ENCODE measurements at regions of chr9 and their contacts with region 1.

Region 1: GRCh38 chr9:6907772-6908381 is 150.1 kb downstream of the KDM4C start:
- DNase-seq: no peak
- ATAC-seq: no peak
- H3K4me3 ChIP-seq: no peak overlapping the region
- H3K27ac ChIP-seq: no peak overlapping the region
- H3K4me1 ChIP-seq: peaks cover 0 to 12% (median 4%) of the 10 kb centered on the region in 9 donors
- H3K27me3 ChIP-seq: no peaks in the 10 kb centered on the region
- CTCF ChIP-seq: peak in 8 of 9 donors; percentile 9 to 74 (median 59)

Region 2: DNA sequence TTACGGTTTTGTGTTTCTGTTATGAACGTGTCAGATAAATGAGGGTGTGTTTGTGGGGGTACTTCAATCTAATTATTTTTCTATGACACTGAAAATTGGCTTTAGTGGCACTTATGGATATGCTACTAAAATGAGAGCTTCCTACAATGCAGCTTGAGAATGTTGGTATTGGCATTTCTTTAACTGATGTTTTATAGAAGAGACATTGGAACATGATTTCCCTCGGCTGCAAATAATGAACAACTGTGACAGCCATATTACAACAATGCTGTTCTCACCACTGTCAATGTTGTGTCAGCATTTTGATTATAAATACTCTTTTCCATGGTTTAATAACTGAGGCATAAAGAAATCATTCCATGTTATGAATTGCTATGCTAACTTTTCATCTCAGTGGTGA is 129.3 kb after region 1 on chr9:
- intact Hi-C with region 1: loop called in 2 of 10 experiments (anchors 5 to 10 kb)
- DNase-seq: no peak
- ATAC-seq: no peak
- H3K4me3 ChIP-seq: no peak overlapping the region
- H3K27ac ChIP-seq: no peak overlapping the region
- H3K4me1 ChIP-seq: no peaks in the 10 kb centered on the region
- H3K27me3 ChIP-seq: no peaks in the 10 kb centered on the region
- CTCF ChIP-seq: no peak

Region 3: DNA sequence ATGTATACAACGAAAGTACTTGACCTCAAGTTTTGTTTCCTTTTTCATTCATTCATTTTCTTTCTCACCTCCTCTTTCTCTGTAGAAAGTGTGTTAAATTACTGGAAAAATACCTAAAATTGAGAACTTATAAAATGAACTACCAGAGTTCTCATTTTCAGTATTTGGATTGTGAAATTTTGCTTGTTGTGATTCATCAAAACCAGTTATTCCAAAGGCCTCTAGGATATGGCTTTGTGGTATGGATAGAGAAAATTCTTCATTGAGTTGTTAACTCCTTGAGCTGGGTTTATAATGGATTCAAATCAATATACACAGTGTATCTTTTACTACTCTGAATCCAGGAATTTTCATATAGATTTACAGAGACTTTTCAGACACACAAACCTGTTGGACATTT is 137.5 kb after region 1 on chr9:
- intact Hi-C with region 1: loop called in 1 of 10 experiments (anchors 10 kb)
- DNase-seq: no peak
- ATAC-seq: no peak
- H3K4me3 ChIP-seq: no peak overlapping the region
- H3K27ac ChIP-seq: no peak overlapping the region
- H3K4me1 ChIP-seq: peaks cover 0 to 6% (median 0%) of the 10 kb centered on the region in 9 donors
- H3K27me3 ChIP-seq: no peaks in the 10 kb centered on the region
- CTCF ChIP-seq: no peak

Region 4: DNA sequence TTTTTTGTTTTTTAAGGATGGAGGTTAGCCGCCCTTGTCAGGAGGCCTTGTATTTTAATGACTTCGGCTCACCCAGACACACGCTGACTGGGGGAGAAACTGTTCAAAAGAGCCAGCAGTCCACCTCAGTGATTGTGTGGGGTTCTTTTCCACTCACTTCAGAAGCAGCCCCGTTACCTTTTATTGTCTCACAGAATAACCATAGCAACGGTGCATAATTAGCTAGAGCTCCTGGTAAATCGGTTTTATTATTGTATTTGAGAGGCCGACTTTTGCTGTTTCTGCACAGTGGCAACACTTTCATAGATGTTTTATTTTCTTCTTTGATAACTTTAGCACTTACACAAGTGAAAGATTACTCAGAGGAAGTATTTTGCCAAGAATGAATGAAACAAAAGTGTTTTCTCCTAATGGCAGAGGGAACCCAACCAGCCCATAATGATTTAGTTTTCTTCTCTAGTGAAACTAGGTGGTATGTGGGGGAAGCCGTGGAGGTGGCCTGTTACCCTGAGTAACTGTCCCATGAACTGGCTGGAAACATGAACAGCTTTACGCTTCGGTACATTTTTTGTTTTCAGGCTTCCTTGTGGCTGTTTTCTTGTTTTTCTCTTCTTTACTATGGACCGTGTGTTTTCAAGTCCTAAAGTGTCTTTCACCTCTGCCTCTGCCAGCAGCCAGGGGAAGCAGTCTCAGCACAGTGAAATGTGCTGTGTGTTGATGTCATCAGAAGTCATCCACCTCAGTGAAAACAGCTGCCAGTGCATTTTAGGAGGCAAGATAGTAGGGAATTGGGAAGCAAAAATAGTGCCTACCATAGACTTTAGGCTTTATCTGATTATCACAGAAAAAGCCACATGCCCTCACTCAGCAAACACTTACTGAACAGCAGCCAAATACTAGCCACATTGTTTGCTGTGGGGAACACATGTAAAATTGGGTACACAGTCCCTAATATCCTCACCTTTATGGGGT is 264.6 kb after region 1 on chr9:
- intact Hi-C with region 1: loop called in 1 of 10 experiments (anchors 10 kb)
- DNase-seq: no peak
- ATAC-seq: peak in 6 of 8 donors; percentile 38 to 87 (median 61)
- H3K4me3 ChIP-seq: no peak overlapping the region
- H3K27ac ChIP-seq: peak overlapping the region in 2 of 10 donors; percentile 20 to 40
- H3K4me1 ChIP-seq: peaks cover 0 to 25% (median 0%) of the 10 kb centered on the region in 9 donors
- H3K27me3 ChIP-seq: no peaks in the 10 kb centered on the region
- CTCF ChIP-seq: peak in 1 of 9 donors; percentile 7

Measured in heart right ventricle (tissue), 16 donors.